ENCODE measurements at regions of chr2 and their contacts with region 1.

Region 1: DNA sequence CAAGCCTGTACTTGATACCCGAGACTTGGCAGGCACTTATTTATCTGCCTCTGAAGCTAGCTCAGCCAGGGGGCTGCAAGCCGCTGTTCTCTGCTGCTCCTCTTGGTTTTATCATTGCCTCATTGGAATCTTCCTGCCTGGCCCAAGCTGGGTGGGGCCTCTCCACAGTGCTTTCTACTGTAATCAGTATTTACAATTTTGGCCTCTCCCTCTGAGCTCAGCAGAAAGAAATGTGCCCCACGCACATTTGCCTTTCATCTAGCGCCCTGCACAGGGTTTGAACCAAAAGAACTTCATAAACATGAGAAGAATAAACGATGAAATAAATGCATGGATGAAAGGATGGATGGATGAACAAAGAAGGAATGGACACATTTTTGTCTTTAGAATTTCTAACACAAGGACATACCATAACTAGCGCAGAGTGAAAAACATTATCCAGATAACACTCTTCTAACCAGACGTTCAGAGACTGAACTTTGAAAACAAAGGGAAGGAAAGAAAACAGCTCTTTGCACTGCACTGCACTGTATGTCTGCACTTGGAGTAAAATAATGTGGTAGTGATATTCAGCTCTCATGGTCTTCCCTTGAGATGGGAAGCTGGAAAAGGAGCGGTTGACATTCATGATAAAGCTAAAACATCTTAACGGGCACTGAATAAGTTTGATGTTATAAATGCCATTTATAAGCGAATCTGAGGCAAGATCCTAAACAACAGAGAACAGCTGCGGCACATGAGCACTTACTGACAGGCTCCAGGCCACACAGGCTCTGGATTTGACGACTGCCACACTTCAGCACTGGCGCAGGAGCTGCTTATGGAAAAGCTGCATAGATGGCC is 86.8 kb upstream of the SP3 start:
- DNase-seq: peak; percentile 73 to 93
- ATAC-seq: peak; percentile 90 to 92
- H3K4me3 ChIP-seq: peak overlapping the region; percentile 46
- H3K27ac ChIP-seq: peak overlapping the region; percentile 85 to 93
- H3K4me1 ChIP-seq: peaks cover 38% of the 10 kb centered on the region
- CTCF ChIP-seq: no peak
- EP300 ChIP-seq: peak; percentile 41 to 77; a peak in 3 of 5 replicates
- POLR2A ChIP-seq: peak; percentile 26; the same call in 1 of the 2 replicates
- RAD21 ChIP-seq: peak; percentile 9 to 47; a peak in 3 of 5 replicates

Region 2: DNA sequence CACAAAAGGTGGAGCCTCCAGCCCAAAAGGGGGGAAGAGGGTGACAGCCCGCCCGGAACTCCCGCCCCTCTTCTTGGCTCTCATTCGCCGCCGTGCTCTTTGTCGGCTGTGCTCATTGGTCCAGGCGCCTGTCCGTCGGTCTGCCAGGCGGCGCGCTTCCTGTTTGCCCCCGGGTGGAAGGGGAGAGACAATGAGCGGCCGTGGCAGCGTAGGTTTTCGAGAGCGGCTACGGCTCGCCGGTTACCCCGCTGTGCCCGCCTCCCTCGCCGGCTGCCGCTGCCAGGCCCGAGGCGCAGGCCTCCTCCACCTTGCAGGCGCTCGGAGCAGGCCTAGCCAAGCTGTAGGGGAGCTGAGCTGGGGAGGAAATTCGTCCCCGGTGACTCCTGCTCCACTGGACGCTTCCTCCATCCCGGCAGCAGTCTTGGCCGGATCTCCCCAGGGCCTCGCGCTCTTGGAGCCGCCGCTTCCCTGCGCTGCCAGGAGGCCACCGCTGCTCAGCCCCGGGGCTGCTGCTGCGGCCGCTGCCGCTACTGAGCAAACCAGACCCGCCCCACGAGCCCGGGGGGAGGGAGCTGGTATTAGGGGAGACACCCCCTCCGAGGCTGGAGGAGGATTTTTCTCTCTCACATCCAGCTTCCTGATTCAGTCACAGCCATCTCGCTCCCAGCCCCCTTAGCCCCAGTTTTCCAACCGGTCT is 86.5 kb before region 1 on chr2 and contains the start of gene SP3:
- CTCF ChIA-PET with region 1: interaction called, 7 read pairs
- POLR2A ChIA-PET with region 1: interaction called, 12 read pairs
- DNase-seq: peak; percentile 95 to 98
- ATAC-seq: peak; percentile 77 to 91
- H3K4me3 ChIP-seq: peak within 1 kb of the TSS; percentile 99
- H3K27ac ChIP-seq: peak within 1 kb of the TSS; percentile 100
- H3K4me1 ChIP-seq: peaks cover 30% of the 10 kb centered on the region
- CTCF ChIP-seq: no peak
- EP300 ChIP-seq: no peak
- POLR2A ChIP-seq: peak; percentile 61
- RAD21 ChIP-seq: peak; percentile 13 to 25; a peak in 3 of 5 replicates
- polyA plus RNA-seq, gene SP3: 83.1 and 94.5 TPM in 2 replicates

Region 3: GRCh38 chr2:174039551-174040416 is 12.2 kb before region 1 on chr2:
- CTCF ChIA-PET with region 1: interaction called, 10 read pairs
- POLR2A ChIA-PET with region 1: interaction called, 4 read pairs
- DNase-seq: peak; percentile 62 to 95
- ATAC-seq: peak; percentile 81 to 92
- H3K4me3 ChIP-seq: no peak overlapping the region
- H3K27ac ChIP-seq: peak overlapping the region; percentile 78 to 93
- H3K4me1 ChIP-seq: peaks cover 56% of the 10 kb centered on the region
- CTCF ChIP-seq: peak; percentile 92
- EP300 ChIP-seq: peak in 1 of 2 experiments; percentile 36; a peak in 1 of 5 replicates
- POLR2A ChIP-seq: no peak
- RAD21 ChIP-seq: peak; percentile 78 to 83